Transverse colon (tissue), 4 donors: ENCODE measurements at regions of chr22 and their contacts with region 1.

Region 1: GRCh38 chr22:38201710-38202436 is at the start of gene MAFF:
- DNase-seq: peak; percentile 98
- H3K4me3 ChIP-seq: peak within 1 kb of the TSS; percentile 45 to 98 (median 86)
- H3K27ac ChIP-seq: peak within 1 kb of the TSS; percentile 96 to 100 (median 99)
- H3K4me1 ChIP-seq: peaks cover 10 to 39% (median 27%) of the 10 kb centered on the region in 4 donors
- H3K27me3 ChIP-seq: no peaks in the 10 kb centered on the region
- CTCF ChIP-seq: no peak
- EP300 ChIP-seq: peak; percentile 13
- POLR2A ChIP-seq: peak; percentile 98
- total RNA-seq, gene MAFF: 3.8 to 30.3 (median 22.0) TPM

Region 2: GRCh38 chr22:38272373-38273134 is 70.7 kb after region 1 on chr22 and contains the start of gene TMEM184B:
- in situ Hi-C with region 1: no loop called
- intact Hi-C with region 1: loop called (anchors 10 kb)
- DNase-seq: peak; percentile 83
- H3K4me3 ChIP-seq: peak within 1 kb of the TSS; percentile 81 to 96 (median 89)
- H3K27ac ChIP-seq: peak within 1 kb of the TSS; percentile 90 to 97 (median 92)
- H3K4me1 ChIP-seq: peaks cover 18 to 41% (median 28%) of the 10 kb centered on the region in 4 donors
- H3K27me3 ChIP-seq: no peaks in the 10 kb centered on the region
- CTCF ChIP-seq: no peak
- EP300 ChIP-seq: no peak
- POLR2A ChIP-seq: peak; percentile 51
- total RNA-seq, gene TMEM184B: 18.7 to 88.4 (median 41.1) TPM

Region 3: DNA sequence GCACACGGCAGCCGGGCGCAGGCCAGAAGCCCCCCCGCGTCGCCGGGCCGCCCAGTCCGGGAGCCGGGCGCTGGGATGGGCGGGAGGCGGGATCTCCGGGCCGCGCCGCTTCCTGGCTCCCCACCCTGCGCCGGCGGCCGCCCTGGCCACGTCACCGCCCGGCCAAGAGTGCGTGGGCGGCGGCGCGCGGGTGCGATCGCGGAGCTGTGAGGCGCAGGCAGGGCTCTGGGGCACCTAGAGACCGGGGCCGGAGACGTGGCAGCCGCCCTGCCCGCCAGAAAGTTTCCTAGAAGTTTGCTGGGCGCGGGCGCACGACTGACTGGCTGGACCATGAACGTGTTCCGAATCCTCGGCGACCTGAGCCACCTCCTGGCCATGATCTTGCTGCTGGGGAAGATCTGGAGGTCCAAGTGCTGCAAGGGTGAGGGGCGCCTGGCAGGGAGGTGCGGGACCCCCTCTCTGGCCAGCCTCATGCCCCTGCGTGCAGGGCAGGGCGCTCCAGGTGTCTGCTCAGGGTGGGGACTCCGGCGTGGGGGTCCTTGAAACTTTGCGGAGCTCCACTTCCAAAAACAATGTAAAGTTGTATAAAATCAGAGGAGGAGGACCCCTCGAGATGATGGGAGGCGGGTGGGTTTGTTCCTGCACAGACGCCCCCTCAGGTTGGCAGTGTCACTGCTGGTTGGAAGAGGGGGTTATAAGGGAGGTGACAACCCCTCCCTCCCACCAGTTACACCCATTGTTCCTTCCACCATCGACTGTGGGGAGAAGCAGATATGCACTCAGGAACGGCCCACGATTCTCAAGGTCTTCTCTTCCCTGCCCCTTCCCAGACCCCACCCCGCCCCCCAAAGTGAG is 266.3 kb after region 1 on chr22 and contains the start of gene KDELR3:
- in situ Hi-C with region 1: no loop called
- intact Hi-C with region 1: no loop called
- DNase-seq: peak; percentile 80
- H3K4me3 ChIP-seq: peak within 1 kb of the TSS; percentile 33 to 60 (median 49)
- H3K27ac ChIP-seq: peak within 1 kb of the TSS in 3 of 4 donors; percentile 45 to 66 (median 62)
- H3K4me1 ChIP-seq: peaks cover 0 to 18% (median 14%) of the 10 kb centered on the region in 4 donors
- H3K27me3 ChIP-seq: peaks cover 34% of the 10 kb centered on the region
- CTCF ChIP-seq: peak in 3 of 5 experiments; percentile 12 to 26 (median 18)
- EP300 ChIP-seq: no peak
- POLR2A ChIP-seq: peak; percentile 43
- total RNA-seq, gene KDELR3: 5.6 to 12.5 (median 8.7) TPM in 3 of 4 donors, not detected in the other